Posterior cingulate gyrus (tissue), 11 donors: ENCODE measurements at regions of chr5 and their contacts with region 1.

Region 1: GRCh38 chr5:155943516-155944407 is 383.2 kb upstream of the SGCD start:
- DNase-seq: peak in 9 of 10 donors; percentile 33 to 95 (median 63)

Region 2: GRCh38 chr5:155343468-155343867 is 600.3 kb before region 1 on chr5:
- intact Hi-C with region 1: no loop called
- DNase-seq: no peak

Region 3: DNA sequence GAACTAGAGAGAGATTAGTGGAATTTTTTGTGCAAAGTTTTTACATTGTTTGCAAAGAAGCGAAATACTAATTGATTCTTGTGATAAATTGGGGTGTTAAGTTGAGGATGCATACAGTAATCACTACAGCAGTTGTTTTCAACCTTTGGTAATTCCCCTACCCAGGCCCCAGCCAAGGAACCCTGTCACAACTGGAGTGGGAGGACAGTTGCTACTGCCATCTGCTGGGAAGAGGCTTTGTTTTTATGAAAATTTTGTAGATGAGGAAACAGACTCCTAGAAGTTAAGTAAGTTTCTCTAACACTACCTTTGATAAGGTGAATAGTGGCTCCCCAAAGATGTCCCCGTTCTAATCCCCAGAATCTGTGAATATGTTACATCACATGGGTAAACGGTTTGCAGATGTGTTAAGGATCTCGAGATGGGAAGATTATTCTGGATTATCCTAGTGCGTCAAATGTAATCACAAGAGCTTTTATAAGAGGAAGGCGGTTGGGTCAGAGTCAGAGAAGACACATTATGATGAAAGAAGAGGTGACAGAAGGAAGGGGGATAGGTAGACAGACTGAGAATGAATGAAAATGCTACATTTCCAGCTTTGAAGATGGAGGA is 872.3 kb after region 1 on chr5:
- intact Hi-C with region 1: loop called (anchors 2 kb)
- DNase-seq: peak in 4 of 10 donors; percentile 11 to 35 (median 17)

Region 4: GRCh38 chr5:156934450-156935211 is 990.9 kb after region 1 on chr5:
- intact Hi-C with region 1: loop called (anchors 10 kb)
- DNase-seq: peak in 6 of 10 donors; percentile 20 to 86 (median 36)